ENCODE measurements at regions of chr1 and their contacts with region 1.

Region 1: GRCh38 chr1:23098463-23099170 is 70.0 kb downstream of the LUZP1 start:
- DNase-seq: peak; percentile 81
- H3K4me3 ChIP-seq: no peak overlapping the region
- H3K27ac ChIP-seq: peak overlapping the region; percentile 86
- H3K27me3 ChIP-seq: no peaks in the 10 kb centered on the region
- CTCF ChIP-seq: peak; percentile 94

Region 2: DNA sequence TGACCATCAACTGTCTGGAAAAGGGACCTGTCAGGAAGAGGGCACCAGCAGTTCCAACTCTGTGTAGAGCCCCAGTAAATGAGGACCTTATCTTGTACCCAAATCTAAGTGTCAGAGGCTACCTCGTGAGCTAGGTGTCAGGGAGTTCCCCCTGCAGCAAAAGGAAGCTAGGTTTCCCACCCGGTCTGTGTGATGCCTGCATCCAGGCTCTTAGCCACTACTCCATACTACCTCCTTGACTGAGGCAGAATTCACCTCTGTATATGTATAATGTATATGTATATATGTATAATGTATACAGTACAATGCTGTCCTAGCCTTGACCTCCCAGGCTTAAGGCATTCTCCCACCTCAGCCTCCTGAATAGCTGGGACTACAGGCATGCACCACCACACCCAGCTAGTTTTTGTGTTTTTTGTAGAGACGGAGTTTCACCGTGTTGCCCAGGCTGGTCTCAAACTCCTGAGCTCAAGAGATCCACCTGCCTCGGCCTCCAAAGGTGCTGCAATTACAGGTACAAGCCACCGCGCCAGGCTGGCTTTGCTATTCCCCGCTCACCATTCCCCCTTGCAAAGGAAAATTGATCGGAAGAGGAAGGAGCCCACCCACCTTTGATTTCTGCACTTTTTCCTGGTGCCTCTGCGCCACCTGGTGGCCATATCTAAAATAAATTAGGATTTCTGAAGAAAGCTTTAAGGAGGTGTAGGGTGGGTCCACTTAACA is 85.8 kb after region 1 on chr1:
- in situ Hi-C with region 1: loop called (anchors 10 kb)
- DNase-seq: no peak
- H3K4me3 ChIP-seq: peak overlapping the region; percentile 37
- H3K27ac ChIP-seq: no peak overlapping the region
- H3K27me3 ChIP-seq: no peaks in the 10 kb centered on the region
- CTCF ChIP-seq: peak; percentile 71

Region 3: GRCh38 chr1:23282957-23283356 is 184.3 kb after region 1 on chr1:
- in situ Hi-C with region 1: loop called (anchors 25 kb)
- DNase-seq: no peak
- H3K4me3 ChIP-seq: no peak overlapping the region
- H3K27ac ChIP-seq: peak overlapping the region; percentile 42
- H3K27me3 ChIP-seq: no peaks in the 10 kb centered on the region
- CTCF ChIP-seq: no peak